ENCODE measurements at regions of chr1 and their contacts with region 1.

Region 1: DNA sequence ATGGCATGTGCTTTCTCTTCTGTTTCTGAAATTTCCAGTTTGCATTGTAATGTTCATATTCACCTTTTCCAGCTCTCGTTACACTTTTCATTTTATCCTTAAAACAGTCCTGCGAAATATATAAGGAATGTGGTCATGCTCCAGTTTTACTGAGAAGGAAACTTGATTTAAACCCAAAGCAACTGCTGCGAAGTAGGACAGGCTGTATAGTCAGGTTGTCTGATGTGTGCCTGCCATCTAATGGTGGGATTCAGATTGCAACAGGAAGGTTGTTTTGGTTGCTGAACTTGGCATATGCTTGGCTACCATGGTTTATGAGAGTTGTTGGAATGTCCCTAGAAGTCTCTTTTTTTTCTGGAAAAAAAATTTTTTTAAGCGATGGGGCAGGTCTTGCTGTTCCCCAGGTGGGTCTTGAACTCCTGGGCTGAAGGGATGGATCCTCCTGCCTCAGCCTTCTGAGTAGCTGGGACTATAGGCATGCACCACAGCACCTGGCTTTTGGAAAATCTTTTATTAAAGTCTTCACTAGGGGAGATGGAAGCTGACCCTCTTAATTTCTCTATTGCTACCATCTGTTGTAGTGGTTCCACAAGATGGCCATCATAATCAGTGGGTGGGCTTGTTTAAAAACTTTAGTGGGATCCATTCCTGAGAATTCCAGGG is 86.9 kb downstream of the UCK2 start:
- DNase-seq: peak in 1 of 3 donors; percentile 93
- ATAC-seq: peak; percentile 58
- H3K4me3 ChIP-seq: no peak overlapping the region
- H3K4me1 ChIP-seq: peaks cover 14% of the 10 kb centered on the region
- CTCF ChIP-seq: peak; percentile 56

Region 2: DNA sequence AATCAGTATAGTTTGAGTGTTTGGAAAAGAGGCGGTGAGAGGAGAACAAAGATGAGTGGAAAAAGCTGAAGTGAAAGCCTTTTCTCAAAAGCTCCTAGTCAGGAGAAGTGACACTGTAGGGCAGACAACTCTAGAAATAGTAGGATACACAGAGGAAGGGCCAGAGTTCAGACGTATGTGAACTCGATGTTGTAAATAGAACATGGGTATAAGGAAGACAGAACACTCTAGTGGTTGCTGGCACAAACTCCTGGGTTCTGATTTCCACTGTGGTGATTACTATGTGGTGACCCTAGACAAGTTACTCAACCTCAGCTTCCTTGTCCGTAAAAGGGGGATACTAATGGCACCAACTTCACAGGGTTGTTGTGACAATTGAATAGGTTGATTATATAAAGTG is 313.5 kb before region 1 on chr1:
- intact Hi-C with region 1: loop called (anchors 2 to 10 kb)
- DNase-seq: peak in 1 of 3 donors; percentile 7
- ATAC-seq: no peak
- H3K4me3 ChIP-seq: no peak overlapping the region
- H3K4me1 ChIP-seq: peaks cover 5% of the 10 kb centered on the region
- CTCF ChIP-seq: no peak

Region 3: GRCh38 chr1:165717918-165718515 is 196.2 kb before region 1 on chr1:
- intact Hi-C with region 1: loop called (anchors 2 to 10 kb)
- DNase-seq: peak in 1 of 3 donors; percentile 82
- ATAC-seq: peak; percentile 62
- H3K4me3 ChIP-seq: no peak overlapping the region
- H3K4me1 ChIP-seq: no peaks in the 10 kb centered on the region
- CTCF ChIP-seq: peak; percentile 41

Region 4: GRCh38 chr1:165768513-165769394 is 145.5 kb before region 1 on chr1 and contains the start of gene TMCO1:
- intact Hi-C with region 1: loop called in 1 of 2 experiments (anchors 5 kb)
- DNase-seq: peak; percentile 93 to 97 (median 96)
- ATAC-seq: peak; percentile 100
- H3K4me3 ChIP-seq: peak within 1 kb of the TSS; percentile 35
- H3K4me1 ChIP-seq: peaks cover 23% of the 10 kb centered on the region
- CTCF ChIP-seq: no peak
- total RNA-seq, gene TMCO1: 103 to 209 (median 144) TPM

Region 5: DNA sequence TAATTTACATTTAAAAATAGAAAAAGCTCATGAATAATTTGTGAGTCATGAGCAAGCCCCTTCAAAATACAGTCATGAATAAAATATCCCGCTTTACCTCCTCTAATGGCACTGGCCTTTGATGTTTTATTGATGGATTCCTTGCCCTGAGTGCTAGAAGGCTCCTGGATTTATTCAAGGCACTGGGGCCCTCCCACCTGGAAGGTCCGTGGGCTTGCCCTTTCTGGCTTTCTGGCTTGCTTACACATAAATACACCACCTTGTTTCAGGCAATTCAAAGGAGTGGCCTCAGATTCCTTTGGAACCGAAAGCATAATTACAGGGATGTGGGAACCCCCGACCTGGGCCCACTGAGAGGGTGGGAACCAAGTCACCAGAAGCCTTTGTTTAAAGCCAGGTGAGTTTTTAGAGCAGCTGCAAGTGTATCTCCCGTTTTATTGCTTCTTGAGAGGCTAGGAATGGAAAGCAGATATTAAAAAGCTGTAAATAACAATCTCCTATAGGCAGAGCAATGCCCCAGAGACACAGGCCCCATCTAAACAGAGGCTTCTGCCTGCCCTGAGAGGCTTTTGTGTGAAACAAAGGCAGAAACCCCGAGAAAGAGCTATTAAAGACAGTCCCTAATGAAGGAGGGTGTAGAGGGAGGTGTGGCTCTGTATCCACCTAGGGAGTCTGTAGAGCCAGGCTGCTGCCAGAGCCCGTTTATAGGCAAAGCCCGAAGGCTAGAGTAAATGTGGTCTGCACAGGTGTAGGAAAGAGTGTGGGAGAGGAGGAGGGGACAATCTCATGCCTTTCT is 126.1 kb after region 1 on chr1:
- intact Hi-C with region 1: no loop called
- DNase-seq: no peak
- ATAC-seq: no peak
- H3K4me3 ChIP-seq: no peak overlapping the region
- H3K4me1 ChIP-seq: no peaks in the 10 kb centered on the region
- CTCF ChIP-seq: no peak

Measured in mucosa of descending colon (tissue), 3 donors.